Heart left ventricle (tissue), 16 donors: ENCODE measurements at regions of chr1 and their contacts with region 1.

Region 1: DNA sequence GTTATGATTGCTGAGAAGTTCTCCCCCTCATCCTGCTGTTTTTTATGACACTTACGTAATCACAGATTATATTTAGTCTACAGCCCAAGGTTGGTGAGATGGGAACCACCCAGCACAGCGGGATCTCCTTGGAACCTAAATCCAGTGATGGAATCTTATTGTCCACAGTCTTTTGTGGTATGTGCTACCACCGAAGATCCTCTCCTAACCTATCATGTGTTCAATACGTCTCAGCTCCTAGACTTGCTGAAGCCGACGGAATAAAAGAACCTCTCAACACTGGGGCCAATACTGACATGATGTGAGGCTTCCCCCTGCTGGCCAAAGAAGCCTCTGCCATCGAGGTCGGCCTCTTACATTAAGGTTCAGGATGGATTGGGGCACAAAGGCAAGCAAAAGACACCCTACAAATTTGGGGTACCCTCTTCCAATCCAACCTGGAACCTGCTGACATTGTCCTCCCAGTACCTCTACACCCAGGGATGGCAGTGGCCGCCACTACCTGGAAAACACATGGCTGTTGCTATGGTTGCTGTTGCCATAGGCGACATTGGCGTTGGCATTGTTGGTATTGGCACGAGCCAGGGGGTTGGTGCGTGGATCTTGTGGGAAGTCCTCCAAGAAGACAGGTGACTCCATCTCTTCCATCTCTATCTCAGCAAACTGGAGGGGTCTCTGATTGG is 19.4 kb upstream of the KIF21B start:
- DNase-seq: peak in 4 of 5 donors; percentile 47 to 58 (median 54)
- ATAC-seq: peak; percentile 44 to 88 (median 84)
- H3K4me3 ChIP-seq: no peak overlapping the region
- H3K27ac ChIP-seq: no peak overlapping the region
- H3K4me1 ChIP-seq: peaks cover 0 to 8% (median 3%) of the 10 kb centered on the region in 12 donors
- H3K27me3 ChIP-seq: no peaks in the 10 kb centered on the region
- CTCF ChIP-seq: peak; percentile 71 to 91 (median 83)
- POLR2A ChIP-seq: no peak

Region 2: GRCh38 chr1:200558866-200559459 is 484.0 kb before region 1 on chr1:
- intact Hi-C with region 1: loop called in 3 of 10 experiments (anchors 5 to 10 kb)
- DNase-seq: no peak
- ATAC-seq: peak in 1 of 4 donors; percentile 46
- H3K4me3 ChIP-seq: no peak overlapping the region
- H3K27ac ChIP-seq: no peak overlapping the region
- H3K4me1 ChIP-seq: no peaks in the 10 kb centered on the region
- H3K27me3 ChIP-seq: no peaks in the 10 kb centered on the region
- CTCF ChIP-seq: peak; percentile 35 to 69 (median 53)
- POLR2A ChIP-seq: no peak

Region 3: DNA sequence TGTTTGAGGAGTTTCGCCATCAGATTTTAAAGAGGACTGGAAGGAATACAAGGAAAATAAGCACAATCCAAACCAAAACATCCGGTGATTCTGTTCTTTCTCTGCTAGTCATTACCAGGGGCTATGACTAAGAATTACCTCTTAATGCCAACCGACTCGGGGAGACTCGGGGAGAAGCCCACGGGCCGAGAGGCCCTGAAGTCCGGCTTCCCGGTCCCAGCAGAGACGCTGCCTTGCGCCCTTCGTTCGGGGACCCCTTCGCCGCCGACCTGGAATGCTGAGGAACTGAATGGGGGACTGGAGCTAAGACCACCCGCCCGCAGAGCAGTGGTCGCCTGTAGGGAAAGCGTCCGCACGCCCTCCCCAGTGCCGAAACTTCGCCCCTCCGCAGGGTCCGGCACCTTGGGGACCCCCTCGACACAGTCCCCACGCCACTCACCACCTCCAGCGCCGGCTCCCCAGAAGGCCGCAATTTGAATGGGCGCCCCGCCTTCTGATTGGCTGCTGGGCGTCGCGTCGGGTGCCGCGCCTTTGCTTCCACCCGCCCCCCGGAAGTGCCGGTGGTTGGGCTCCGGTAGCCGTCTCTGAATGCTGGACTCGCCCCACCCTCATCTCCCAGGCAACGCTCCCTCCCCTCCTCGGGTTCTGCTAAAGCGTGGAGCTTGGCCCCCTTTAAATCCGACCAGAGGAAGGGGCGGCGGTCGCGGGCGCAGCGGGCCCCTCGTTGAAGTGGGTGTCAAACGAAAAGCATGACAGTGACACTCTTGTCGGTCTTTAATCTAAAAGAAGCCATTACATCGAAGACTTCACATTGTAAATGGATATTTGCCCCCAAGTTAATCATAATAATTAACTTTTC is 422.4 kb before region 1 on chr1 and contains the start of gene KIF14:
- intact Hi-C with region 1: loop called in 4 of 10 experiments (anchors 2 to 10 kb)
- DNase-seq: peak; percentile 92 to 94 (median 94)
- ATAC-seq: peak; percentile 97 to 100 (median 100)
- H3K4me3 ChIP-seq: peak within 1 kb of the TSS; percentile 47 to 87 (median 63)
- H3K27ac ChIP-seq: peak within 1 kb of the TSS in 5 of 12 donors; percentile 4 to 74 (median 40)
- H3K4me1 ChIP-seq: peaks cover 0 to 32% (median 7%) of the 10 kb centered on the region in 12 donors
- H3K27me3 ChIP-seq: no peaks in the 10 kb centered on the region
- CTCF ChIP-seq: no peak
- POLR2A ChIP-seq: no peak
- total RNA-seq, gene KIF14: 0.04 to 2.0 (median 0.14) TPM in 8 of 9 donors, not detected in the other

Region 4: DNA sequence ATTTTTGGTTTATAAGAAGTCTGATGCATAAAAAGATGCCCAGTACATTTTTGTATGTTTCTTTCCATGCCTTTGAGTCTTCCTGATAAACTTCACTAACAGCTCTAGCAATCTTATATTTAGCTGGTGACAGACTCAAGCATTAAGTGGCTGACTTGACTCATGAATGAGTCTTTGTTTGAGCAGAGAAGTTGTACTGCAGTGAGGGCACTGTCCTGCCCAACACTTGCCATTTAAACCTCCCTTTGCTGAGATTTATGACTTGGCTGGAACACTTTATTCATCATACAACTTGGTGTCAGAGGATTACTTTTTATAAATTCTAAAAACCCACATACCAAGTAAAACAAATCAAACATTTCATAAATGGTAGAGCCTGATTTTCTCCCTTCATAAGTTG is 318.9 kb before region 1 on chr1:
- intact Hi-C with region 1: no loop called
- DNase-seq: no peak
- ATAC-seq: peak in 1 of 4 donors; percentile 57
- H3K4me3 ChIP-seq: no peak overlapping the region
- H3K27ac ChIP-seq: no peak overlapping the region
- H3K4me1 ChIP-seq: no peaks in the 10 kb centered on the region
- H3K27me3 ChIP-seq: no peaks in the 10 kb centered on the region
- CTCF ChIP-seq: no peak
- POLR2A ChIP-seq: no peak

Region 5: DNA sequence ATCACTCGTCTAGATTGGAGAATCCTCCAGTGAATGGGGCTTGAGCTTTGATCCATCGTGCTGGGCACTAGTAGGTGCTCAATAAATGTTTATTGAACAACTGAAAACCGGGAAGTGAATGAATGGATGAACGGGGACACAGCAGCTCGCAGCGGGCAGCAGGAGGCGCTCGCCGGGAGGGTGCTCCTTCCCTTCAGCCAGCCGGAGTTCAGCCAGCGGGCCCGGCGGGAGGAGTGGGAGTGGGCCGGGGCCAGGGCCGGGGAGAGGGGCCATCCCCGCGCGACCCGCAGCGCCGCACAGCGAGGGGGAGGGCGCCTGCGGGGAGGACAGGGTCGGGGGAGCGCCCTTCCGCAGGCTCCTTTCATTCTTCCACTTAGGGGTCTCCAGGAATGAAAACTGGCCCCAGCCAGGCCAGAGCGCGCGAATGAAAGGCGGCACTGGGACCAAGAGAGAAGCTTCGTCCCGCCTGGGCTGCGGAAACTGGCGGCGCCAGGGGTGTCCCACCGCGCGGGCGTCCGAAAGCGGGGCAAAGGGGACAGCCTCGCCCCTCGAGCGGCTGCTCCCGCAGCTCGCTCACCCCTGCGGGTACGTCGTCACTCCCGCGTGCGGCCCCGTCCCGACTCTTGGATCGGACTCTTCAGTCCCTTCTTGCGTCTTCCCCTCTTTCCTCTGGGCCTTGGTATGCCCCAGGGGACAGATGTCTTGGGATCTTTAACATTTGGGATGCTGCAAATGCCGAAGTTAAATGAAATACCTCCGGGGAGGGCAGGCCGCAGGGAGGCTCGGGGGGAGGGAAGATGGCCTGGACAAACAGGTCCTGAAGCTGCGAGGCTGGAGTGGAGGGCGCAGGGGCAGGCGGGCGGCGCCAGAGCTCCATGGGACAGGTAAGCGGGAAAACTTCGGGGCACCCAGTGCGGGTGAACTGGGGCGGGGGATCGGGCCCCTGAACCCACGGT is 151.8 kb before region 1 on chr1:
- intact Hi-C with region 1: loop called in 1 of 10 experiments (anchors 5 kb)
- DNase-seq: no peak
- ATAC-seq: peak in 2 of 4 donors; percentile 52 to 64
- H3K4me3 ChIP-seq: peak overlapping the region; percentile 21 to 62 (median 45)
- H3K27ac ChIP-seq: no peak overlapping the region
- H3K4me1 ChIP-seq: peaks cover 0 to 35% (median 11%) of the 10 kb centered on the region in 12 donors
- H3K27me3 ChIP-seq: peaks cover 4 to 46% (median 31%) of the 10 kb centered on the region in 9 donors
- CTCF ChIP-seq: peak in 8 of 12 donors; percentile 5 to 37 (median 15)
- POLR2A ChIP-seq: no peak

Region 6: DNA sequence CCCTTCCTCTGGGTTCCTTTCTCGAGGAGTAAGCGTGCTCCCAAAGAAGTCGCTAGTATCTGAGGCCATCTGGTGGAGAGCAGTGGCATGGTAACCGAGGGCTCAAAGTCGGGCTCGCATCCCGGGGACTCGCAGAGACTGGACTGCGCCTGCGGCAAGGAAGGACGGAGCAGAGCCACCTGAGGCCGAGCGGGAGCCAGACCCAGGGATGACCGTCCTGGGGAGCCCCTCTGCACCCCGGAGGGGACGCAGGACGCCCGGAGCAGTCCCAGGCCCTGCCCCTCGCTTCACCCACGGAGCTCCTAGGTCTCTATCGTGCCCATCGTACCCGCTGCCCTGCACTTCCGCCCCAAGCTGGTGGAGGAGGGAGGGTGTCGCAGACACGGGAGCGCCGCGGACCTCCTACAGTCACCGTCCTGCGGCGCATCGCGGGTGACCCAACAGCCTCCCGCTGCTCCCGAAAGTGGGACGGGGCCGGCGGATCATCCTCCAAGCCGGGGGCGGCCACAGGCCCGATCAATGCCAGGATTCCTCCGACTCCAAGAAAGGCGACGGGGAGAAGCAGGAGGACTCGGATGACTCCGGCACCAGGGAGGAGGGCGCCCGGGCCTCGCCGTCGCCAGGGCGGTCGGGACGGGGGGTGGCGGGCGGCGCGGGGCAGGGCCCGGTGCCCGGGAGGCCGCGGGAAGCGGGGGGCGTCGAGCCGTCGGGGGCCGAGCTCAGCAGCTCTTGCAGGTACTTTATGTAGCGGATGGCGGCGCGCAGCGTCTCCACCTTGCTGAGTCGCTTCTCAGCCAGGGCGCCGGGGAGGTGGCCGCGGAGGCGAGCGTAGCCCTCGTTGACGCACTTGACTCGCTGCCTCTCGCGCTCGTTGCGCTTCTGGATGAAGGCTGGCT is 71.6 kb after region 1 on chr1:
- intact Hi-C with region 1: loop called in 2 of 10 experiments (anchors 5 kb)
- DNase-seq: peak; percentile 78 to 88 (median 87)
- ATAC-seq: peak; percentile 79 to 98 (median 94)
- H3K4me3 ChIP-seq: peak overlapping the region; percentile 3 to 66 (median 52)
- H3K27ac ChIP-seq: no peak overlapping the region
- H3K4me1 ChIP-seq: peaks cover 0 to 15% (median 5%) of the 10 kb centered on the region in 12 donors
- H3K27me3 ChIP-seq: peaks cover 0 to 43% (median 14%) of the 10 kb centered on the region in 9 donors
- CTCF ChIP-seq: peak; percentile 60 to 90 (median 76)
- POLR2A ChIP-seq: no peak

Region 7: DNA sequence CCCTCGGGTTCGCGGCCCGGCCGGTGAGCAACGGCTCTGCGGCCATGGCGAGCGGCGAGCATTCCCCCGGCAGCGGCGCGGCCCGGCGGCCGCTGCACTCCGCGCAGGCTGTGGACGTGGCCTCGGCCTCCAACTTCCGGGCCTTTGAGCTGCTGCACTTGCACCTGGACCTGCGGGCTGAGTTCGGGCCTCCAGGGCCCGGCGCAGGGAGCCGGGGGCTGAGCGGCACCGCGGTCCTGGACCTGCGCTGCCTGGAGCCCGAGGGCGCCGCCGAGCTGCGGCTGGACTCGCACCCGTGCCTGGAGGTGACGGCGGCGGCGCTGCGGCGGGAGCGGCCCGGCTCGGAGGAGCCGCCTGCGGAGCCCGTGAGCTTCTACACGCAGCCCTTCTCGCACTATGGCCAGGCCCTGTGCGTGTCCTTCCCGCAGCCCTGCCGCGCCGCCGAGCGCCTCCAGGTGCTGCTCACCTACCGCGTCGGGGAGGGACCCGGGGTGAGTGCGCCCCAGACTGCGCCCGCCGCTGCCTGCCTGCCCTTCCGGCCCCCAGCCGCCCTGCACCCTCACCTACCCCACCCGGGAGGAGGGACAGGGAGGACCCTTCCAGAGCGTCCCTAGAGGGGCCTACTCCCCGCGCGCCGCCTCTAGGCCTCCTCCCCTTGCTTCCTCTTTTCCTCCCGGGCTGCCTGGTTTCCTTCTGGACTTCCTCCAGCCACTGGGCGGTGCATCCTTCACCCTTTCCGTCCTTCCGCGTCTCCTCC is 939.9 kb after region 1 on chr1 and contains the start of gene RNPEP:
- intact Hi-C with region 1: no loop called
- DNase-seq: peak; percentile 81 to 85 (median 83)
- ATAC-seq: peak; percentile 65 to 92 (median 88)
- H3K4me3 ChIP-seq: peak within 1 kb of the TSS; percentile 75 to 100 (median 96)
- H3K27ac ChIP-seq: peak within 1 kb of the TSS; percentile 43 to 98 (median 94)
- H3K4me1 ChIP-seq: peaks cover 0 to 39% (median 16%) of the 10 kb centered on the region in 12 donors
- H3K27me3 ChIP-seq: no peaks in the 10 kb centered on the region
- CTCF ChIP-seq: peak in 4 of 12 donors; percentile 4 to 18 (median 10)
- POLR2A ChIP-seq: peak; percentile 33 to 70
- total RNA-seq, gene RNPEP: 14.1 to 36.2 (median 18.1) TPM